Common myeloid progenitor, CD34-positive (primary cell): ENCODE measurements at regions of chr20 and their contacts with region 1.

Region 1: GRCh38 chr20:22586645-22587310 is 2.4 kb upstream of the FOXA2 start:
- DNase-seq: peak in 2 of 3 donors; percentile 40 to 46
- H3K4me3 ChIP-seq: no peak overlapping the region
- H3K27ac ChIP-seq: no peak overlapping the region
- H3K4me1 ChIP-seq: peaks cover 0 to 32% (median 15%) of the 10 kb centered on the region in 4 experiments
- H3K27me3 ChIP-seq: peaks cover 13 to 100% (median 54%) of the 10 kb centered on the region in 5 experiments

Region 2: DNA sequence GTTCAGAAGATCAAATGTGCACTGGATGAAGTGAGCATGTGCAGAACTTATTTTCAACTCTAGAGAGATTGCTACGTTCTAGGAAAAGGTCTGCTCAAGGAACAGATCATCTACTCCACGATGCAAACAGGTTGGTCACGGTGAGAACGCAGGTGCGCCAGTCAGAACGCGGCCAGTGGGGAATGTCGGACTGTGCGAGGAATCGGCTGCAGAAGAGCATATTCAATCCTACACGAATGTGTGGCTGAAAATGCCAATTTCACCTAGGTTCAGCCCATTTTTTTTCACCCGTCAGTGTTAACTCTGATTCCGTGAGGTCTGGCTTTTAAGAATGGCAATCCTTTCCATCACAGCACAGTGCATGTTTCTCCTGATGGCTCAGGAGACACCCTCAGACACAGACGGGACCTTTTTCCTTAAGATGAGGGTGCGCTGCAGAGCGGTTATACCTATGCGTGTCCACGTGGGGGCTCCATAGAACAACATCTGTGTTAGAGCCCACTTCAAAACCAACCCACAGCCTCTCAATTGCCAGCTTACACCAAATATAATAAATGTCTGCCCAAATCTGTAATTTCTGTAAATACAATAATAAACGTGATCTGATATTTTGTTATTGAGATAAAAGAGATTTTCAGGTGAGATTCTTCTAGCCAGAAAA is 252.8 kb before region 1 on chr20:
- CTCF ChIA-PET with region 1: interaction called, 57 read pairs
- POLR2A ChIA-PET with region 1: no interaction called
- DNase-seq: peak; percentile 61 to 85 (median 80)
- H3K4me3 ChIP-seq: no peak overlapping the region
- H3K27ac ChIP-seq: no peak overlapping the region
- H3K4me1 ChIP-seq: no peaks in the 10 kb centered on the region
- H3K27me3 ChIP-seq: peaks cover 0 to 35% (median 15%) of the 10 kb centered on the region in 5 experiments

Region 3: DNA sequence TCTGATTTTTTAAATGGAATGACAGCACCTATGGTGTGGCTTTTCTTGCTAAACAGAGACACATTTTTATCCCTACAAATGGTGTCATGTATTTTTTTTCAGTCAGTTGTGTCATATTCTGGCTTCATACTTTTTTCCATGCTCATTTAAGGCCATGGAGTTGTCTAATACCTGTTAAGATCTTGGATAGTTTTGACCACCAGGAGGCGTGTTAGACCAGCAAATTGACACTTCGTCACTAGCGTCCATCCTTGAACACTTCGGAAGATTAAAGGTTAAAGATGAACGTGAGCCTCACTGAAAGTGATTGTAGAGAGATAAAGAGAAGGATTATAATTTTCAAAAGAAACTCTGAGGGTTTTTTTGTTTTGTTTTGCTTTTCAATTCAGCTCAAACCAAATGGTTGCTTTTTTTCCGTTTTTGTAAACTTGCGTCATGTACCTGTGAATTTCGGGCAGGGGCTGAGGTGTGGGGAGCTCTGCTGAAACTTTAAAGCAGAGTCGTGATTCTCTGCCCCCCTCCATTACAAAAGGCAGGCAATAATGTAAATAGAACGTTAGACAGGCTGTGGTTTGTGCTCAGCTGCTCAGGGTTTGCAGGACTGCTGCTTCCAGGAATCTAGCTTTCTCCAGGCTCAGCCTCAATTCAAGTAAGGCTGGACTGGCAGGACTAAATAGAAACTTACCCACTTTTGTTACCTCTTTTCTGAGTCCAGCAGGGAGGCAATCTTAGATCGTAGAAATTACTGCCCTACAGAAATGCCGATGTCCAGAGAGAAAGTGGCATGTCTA is 247.5 kb before region 1 on chr20:
- CTCF ChIA-PET with region 1: interaction called, 57 read pairs
- POLR2A ChIA-PET with region 1: no interaction called
- DNase-seq: peak; percentile 77 to 85 (median 79)
- H3K4me3 ChIP-seq: peak overlapping the region in 2 of 7 experiments; percentile 17 to 25
- H3K27ac ChIP-seq: no peak overlapping the region
- H3K4me1 ChIP-seq: peaks cover 0 to 10% (median 8%) of the 10 kb centered on the region in 4 experiments
- H3K27me3 ChIP-seq: peaks cover 0 to 2% (median 0%) of the 10 kb centered on the region in 5 experiments

Region 4: DNA sequence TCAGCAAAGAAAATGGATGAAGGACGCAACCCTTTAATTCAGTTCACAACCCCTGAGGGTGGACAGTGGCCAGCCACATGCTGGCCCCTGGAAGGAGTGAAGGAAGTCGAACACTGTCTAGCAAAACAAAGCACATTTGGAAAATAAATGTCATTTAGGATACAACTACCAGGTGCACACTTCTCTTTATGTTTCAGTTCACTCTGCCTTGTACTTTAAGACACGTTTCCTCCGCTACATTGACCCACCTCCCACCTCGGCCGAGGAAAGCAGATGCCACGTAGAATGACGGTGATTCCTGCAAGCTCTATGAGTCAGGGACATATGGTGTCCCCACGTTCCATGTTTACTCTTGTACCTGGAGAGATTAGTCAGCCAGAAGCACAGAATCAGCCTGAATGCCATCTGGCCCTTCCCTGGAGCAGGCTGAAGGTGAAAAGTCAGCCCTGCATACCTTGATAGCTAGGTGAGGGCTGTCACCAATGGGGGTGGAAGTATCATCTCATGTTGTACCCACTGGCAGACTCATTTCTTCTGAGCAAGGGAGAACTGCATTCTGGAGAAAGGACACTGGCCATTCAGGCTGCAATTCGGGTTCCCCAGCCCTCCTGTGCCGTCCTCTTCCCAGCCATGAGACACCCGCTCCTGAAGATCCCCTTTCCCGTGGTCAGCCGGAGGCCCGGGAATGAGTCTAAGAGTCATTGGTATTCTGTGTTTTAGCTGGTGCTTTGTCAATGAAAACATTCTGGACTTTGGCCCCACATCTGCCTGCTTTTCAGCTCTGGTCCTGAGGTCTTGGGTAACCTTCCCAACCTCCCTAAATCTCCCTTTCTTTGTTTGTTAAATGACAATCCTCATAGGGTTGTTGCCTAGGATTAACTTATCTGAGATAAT is 63.0 kb before region 1 on chr20:
- CTCF ChIA-PET with region 1: no interaction called
- POLR2A ChIA-PET with region 1: no interaction called
- DNase-seq: no peak
- H3K4me3 ChIP-seq: no peak overlapping the region
- H3K27ac ChIP-seq: no peak overlapping the region
- H3K4me1 ChIP-seq: no peaks in the 10 kb centered on the region
- H3K27me3 ChIP-seq: peaks cover 0 to 11% (median 0%) of the 10 kb centered on the region in 5 experiments

Region 5: DNA sequence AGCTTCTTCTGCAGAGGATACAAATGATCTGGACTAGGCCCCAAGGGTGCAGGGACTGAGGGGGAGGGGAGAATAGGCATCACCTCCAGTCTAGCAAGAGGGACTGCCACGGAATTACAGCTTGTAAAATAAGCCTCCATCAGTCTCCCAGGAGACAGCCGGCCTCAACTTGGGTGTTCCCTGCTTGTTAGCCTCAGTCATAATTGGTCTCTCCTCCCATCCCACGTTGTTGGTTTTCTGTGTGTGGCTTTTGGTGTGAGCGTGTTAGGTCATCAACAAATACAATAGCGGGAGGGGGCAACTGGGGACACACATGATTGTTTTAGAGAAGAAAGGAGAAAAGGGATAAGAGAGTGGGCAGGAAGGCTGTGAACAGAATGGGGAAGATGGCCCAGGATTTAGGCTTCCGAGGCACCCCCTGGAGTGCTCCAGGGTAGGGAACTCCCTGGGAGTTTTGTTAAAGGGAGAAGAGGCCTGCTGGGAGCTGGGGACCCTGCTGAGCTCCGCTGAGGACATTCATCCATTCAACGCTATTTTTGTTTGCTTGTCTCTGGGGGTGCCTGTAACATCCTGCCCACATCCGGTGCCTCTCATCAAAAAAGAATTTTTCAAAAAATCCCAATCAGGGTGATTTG is 11.6 kb before region 1 on chr20:
- CTCF ChIA-PET with region 1: interaction called, 13 read pairs
- POLR2A ChIA-PET with region 1: no interaction called
- DNase-seq: no peak
- H3K4me3 ChIP-seq: no peak overlapping the region
- H3K27ac ChIP-seq: no peak overlapping the region
- H3K4me1 ChIP-seq: peaks cover 0 to 8% (median 2%) of the 10 kb centered on the region in 4 experiments
- H3K27me3 ChIP-seq: peaks cover 37 to 100% (median 59%) of the 10 kb centered on the region in 5 experiments

Region 6: DNA sequence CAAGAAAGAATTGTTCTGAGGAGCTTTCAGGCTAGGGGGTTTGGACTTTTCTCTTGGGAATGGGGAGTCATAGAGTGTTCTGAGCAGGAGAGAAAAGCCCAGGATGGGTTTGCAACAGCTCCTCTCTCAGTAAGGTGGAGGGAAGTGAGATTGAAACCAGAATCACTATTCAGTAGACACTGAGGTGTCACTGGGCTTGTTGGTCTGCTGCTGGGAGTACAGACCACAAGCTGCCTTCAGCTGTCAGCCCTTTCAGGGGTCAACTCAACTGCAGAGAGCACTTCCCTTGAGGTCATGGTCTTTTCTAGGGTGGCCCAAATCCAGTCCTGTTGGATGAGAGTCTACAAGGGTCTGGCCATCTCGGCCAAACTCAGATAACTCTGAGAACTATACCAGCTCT is 10.5 kb after region 1 on chr20:
- CTCF ChIA-PET with region 1: interaction called, 25 read pairs
- POLR2A ChIA-PET with region 1: no interaction called
- DNase-seq: no peak
- H3K4me3 ChIP-seq: no peak overlapping the region
- H3K27ac ChIP-seq: no peak overlapping the region
- H3K4me1 ChIP-seq: no peaks in the 10 kb centered on the region
- H3K27me3 ChIP-seq: peaks cover 10 to 55% (median 14%) of the 10 kb centered on the region in 5 experiments

Region 7: GRCh38 chr20:22611636-22612035 is 24.9 kb after region 1 on chr20:
- CTCF ChIA-PET with region 1: no interaction called
- POLR2A ChIA-PET with region 1: no interaction called
- DNase-seq: no peak
- H3K4me3 ChIP-seq: no peak overlapping the region
- H3K27ac ChIP-seq: no peak overlapping the region
- H3K4me1 ChIP-seq: no peaks in the 10 kb centered on the region
- H3K27me3 ChIP-seq: peaks cover 3 to 36% (median 12%) of the 10 kb centered on the region in 5 experiments